K562 (cell line): ENCODE measurements at regions of chr5 and their contacts with region 1.

Region 1: GRCh38 chr5:135295852-135296251 is 103.2 kb downstream of the MACROH2A1 start:
- DNase-seq: no peak
- ATAC-seq: no peak
- H3K4me3 ChIP-seq: no peak overlapping the region
- H3K27ac ChIP-seq: no peak overlapping the region
- H3K4me1 ChIP-seq: peaks cover 8 to 19% of the 10 kb centered on the region in 2 experiments
- H3K27me3 ChIP-seq: no peaks in the 10 kb centered on the region
- CTCF ChIP-seq: no peak
- EP300 ChIP-seq: no peak
- POLR2A ChIP-seq: no peak
- RAD21 ChIP-seq: no peak

Region 2: DNA sequence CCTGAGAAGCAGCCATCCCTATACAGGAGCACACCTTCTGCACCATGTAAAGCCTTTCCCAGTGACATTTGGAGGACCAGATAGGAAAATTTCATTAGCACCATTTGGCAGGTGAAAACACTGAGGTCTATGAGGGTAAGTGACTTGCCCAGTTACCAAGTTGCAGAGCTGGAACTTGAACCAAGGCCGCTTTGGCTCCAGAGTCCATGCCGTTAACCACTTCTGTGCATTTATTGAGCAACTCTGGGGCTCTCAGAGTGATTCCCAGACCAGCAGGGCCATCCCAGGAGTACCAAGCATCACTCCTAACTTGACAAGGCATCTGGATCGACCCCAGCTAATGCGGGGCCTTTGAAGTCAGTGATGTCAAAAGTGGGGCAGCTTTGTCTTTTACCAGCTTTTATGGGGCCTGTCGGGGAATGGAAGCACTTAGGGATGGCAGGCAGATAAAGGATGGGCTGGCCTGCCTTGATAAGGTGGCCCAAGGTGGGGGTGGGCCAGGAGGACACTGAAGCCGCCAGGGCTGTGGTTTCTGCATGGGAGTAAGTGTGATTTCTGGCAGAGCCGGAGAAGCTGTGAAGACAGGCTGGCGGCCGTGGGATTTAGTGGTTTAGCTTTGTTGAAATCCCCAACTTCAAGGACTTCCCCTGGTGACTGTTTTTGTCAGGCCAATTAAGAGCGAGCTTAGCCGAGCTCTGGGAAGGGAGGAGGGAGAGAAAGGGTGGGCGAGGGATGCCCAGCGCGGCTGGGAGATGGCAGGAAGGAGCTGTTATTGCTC is 24.1 kb before region 1 on chr5:
- CTCF ChIA-PET with region 1: no interaction called
- POLR2A ChIA-PET with region 1: interaction called, 4 read pairs
- in situ Hi-C with region 1: no loop called
- intact Hi-C with region 1: loop called (anchors 2 kb)
- DNase-seq: peak; percentile 85 to 96 (median 90)
- ATAC-seq: peak; percentile 95
- H3K4me3 ChIP-seq: peak overlapping the region; percentile 2; the same call in 1 of the 2 replicates
- H3K27ac ChIP-seq: peak overlapping the region; percentile 51; the same call in 2 of the 3 replicates
- H3K4me1 ChIP-seq: peaks cover 21% of the 10 kb centered on the region in 2 experiments
- H3K27me3 ChIP-seq: no peaks in the 10 kb centered on the region
- CTCF ChIP-seq: no peak
- EP300 ChIP-seq: peak; percentile 95
- POLR2A ChIP-seq: no peak
- RAD21 ChIP-seq: peak; percentile 21 to 32; a peak in 2 of 4 replicates